CD8-positive, alpha-beta T cell (primary cell): ENCODE measurements at regions of chr15 and their contacts with region 1.

Region 1: DNA sequence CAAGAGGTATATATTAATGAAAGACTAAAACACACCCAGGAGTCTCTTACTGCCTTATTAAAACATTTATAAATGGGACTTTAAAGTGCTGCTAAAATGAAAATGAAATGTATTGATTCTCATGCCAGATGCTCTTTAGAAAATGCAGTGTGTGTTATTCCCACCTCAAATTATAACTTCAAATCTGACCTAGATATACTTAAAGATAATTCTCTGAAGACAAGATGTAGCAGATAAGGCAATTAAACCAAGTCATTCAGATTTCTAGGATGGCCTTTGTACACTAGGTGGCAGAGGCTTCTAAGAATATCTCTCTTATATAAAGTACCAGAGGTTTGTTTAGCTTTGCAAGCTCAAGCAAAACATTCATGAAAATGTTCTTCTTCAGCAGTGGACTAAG is 26.9 kb upstream of the GOLGA8B start:
- DNase-seq: peak in 1 of 9 experiments; percentile 31
- ATAC-seq: peak; percentile 36
- H3K4me3 ChIP-seq: no peak overlapping the region
- H3K4me3 Mint-ChIP-seq: no peak overlapping the region
- H3K27ac ChIP-seq: no peak overlapping the region
- H3K27ac Mint-ChIP-seq: peak overlapping the region; percentile 7
- H3K4me1 ChIP-seq: peaks cover 18% of the 10 kb centered on the region
- H3K4me1 Mint-ChIP-seq: peaks cover 18% of the 10 kb centered on the region
- H3K27me3 ChIP-seq: peaks cover 0 to 2% of the 10 kb centered on the region in 2 experiments
- H3K27me3 Mint-ChIP-seq: peaks cover 18% of the 10 kb centered on the region
- CTCF ChIP-seq: no peak

Region 2: GRCh38 chr15:34132881-34133280 is 477.5 kb before region 1 on chr15:
- CTCF ChIA-PET with region 1: no interaction called
- POLR2A ChIA-PET with region 1: no interaction called
- intact Hi-C with region 1: loop called in 1 of 2 experiments (anchors 5 kb)
- DNase-seq: no peak
- ATAC-seq: no peak
- H3K4me3 ChIP-seq: no peak overlapping the region
- H3K4me3 Mint-ChIP-seq: no peak overlapping the region
- H3K27ac ChIP-seq: no peak overlapping the region
- H3K27ac Mint-ChIP-seq: no peak overlapping the region
- H3K4me1 ChIP-seq: no peaks in the 10 kb centered on the region
- H3K4me1 Mint-ChIP-seq: no peaks in the 10 kb centered on the region
- H3K27me3 ChIP-seq: no peaks in the 10 kb centered on the region
- H3K27me3 Mint-ChIP-seq: no peaks in the 10 kb centered on the region
- CTCF ChIP-seq: no peak

Region 3: GRCh38 chr15:34927726-34928125 is 317.4 kb after region 1 on chr15:
- CTCF ChIA-PET with region 1: interaction called, 4 read pairs
- POLR2A ChIA-PET with region 1: no interaction called
- intact Hi-C with region 1: loop called in 1 of 2 experiments (anchors 5 kb)
- DNase-seq: no peak
- ATAC-seq: no peak
- H3K4me3 ChIP-seq: no peak overlapping the region
- H3K4me3 Mint-ChIP-seq: no peak overlapping the region
- H3K27ac ChIP-seq: no peak overlapping the region
- H3K27ac Mint-ChIP-seq: no peak overlapping the region
- H3K4me1 ChIP-seq: no peaks in the 10 kb centered on the region
- H3K4me1 Mint-ChIP-seq: no peaks in the 10 kb centered on the region
- H3K27me3 ChIP-seq: no peaks in the 10 kb centered on the region
- H3K27me3 Mint-ChIP-seq: no peaks in the 10 kb centered on the region
- CTCF ChIP-seq: no peak